ENCODE measurements at regions of chr3 and their contacts with region 1.

Region 1: DNA sequence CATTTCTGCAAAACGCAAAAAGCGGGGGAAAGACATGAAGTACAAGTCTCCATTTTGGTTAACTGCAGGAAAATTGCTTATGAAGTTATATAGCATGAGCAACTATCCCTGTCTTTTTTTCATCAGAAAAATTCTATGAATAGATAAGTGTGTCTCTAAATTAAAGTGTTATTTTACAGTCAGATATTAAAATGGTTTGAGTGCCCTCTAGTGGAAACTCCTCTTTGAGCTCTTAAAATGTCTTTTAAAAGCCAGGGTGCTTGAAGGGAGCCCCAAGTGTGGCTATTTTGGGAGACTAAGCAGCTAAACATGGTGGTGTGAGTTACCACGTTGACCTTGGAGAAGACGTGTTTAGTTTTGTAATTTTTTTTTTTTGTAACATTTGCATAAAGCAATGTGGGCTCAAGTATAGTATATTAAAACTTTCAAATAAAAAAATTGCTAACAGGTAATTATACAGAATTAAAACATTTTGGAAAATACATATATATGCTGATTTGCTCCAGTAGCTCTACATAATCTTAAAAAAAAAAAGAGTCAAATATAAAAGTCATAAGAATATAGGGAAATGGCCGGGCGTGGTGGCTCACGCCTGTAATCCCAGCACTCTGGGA is 77.2 kb downstream of the PPP2R3A start:
- DNase-seq: peak in 2 of 5 donors; percentile 3 to 9
- H3K4me3 ChIP-seq: no peak overlapping the region
- H3K4me3 Mint-ChIP-seq: no peak overlapping the region
- H3K27ac ChIP-seq: no peak overlapping the region
- H3K27ac Mint-ChIP-seq: no peak overlapping the region
- H3K4me1 ChIP-seq: no peaks in the 10 kb centered on the region
- H3K4me1 Mint-ChIP-seq: no peaks in the 10 kb centered on the region
- H3K27me3 ChIP-seq: peaks cover 6% of the 10 kb centered on the region
- H3K27me3 Mint-ChIP-seq: peaks cover 14% of the 10 kb centered on the region in 2 donors

Region 2: DNA sequence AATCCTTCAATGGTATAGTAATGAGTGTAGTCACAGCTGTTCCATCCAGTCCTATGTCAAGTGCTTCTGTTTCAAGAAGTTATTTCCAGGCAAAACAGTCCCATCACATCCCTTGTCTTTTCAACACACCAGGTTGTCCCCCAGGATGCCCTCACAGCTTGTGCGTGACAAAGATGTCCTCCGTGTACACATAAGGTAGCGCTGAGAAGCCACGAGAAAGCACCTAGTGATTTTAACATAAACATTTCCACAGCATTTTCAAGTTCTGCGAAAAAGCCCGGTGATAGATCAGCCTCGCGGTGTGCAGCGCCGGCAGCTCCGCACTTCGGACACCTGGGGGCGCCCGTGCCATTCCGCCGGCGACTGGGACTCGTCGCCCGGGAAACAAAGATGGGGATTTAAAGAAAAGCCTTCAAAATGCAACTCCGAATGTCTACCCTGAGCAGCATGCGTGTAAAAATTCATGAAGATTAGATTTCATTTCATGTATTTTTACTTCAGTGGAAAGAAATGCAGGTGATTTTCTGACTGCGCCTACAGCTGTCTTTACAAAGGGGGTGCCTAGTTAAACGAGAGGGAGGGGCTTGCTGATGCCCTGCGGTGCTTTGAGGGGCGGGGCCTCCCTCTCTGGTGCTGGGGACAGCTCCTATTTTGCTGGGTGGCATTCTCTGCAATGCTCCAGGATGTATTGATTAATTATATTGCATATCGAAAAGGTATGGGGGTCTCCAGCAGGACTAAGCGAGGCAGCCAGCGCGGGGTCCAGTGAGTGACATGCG is 1441.8 kb before region 1 on chr3:
- CTCF ChIA-PET with region 1: interaction called, 10 read pairs
- POLR2A ChIA-PET with region 1: no interaction called
- intact Hi-C with region 1: no loop called
- DNase-seq: peak in 4 of 5 donors; percentile 31 to 43 (median 38)
- H3K4me3 ChIP-seq: no peak overlapping the region
- H3K4me3 Mint-ChIP-seq: peak overlapping the region in 6 of 8 donors; percentile 1 to 68 (median 42)
- H3K27ac ChIP-seq: no peak overlapping the region
- H3K27ac Mint-ChIP-seq: no peak overlapping the region
- H3K4me1 ChIP-seq: no peaks in the 10 kb centered on the region
- H3K4me1 Mint-ChIP-seq: peaks cover 4 to 11% (median 6%) of the 10 kb centered on the region in 4 donors
- H3K27me3 ChIP-seq: no peaks in the 10 kb centered on the region
- H3K27me3 Mint-ChIP-seq: peaks cover 2 to 11% of the 10 kb centered on the region in 2 donors

Region 3: DNA sequence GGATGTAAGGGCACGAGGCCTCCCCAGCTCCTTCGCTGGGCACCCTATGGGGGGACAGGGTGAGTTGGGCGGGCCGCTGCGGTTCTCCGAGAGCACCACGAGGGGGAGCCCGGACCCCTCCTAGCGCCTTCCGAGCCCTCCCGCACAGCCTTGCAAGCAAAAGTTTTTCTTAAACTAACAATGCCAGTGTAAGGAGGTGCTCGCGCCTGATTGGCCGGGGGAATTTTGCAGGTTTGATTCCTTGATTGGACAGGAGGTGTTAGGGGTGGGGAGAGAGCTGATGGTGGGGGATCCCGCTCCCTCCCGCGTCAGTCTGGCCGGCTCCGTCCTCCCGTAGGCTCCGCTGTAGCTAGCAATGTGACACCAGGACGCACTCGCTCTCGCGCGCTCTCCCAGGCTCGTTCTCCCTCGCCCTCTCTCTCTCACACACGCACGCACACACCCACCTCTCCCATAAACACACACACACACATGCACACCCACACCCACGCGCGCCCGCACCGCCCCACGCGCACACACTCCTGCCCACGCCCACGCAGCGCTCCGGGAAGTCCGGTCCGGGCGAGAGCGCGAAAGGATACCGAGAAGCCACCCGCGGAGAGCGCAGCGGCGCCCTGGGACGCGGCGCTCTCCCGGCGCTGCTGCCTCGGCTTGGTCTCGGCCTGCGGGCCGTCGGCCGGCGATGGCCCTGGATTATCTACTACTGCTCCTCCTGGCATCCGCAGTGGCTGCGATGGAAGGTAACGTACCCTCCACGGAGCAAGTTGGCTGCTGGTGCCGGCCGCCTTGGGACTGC is 1247.6 kb before region 1 on chr3 and contains the start of gene EPHB1:
- CTCF ChIA-PET with region 1: interaction called, 10 read pairs
- POLR2A ChIA-PET with region 1: no interaction called
- intact Hi-C with region 1: loop called (anchors 5 kb)
- DNase-seq: peak; percentile 29 to 44 (median 38)
- H3K4me3 ChIP-seq: peak within 1 kb of the TSS in 1 of 2 donors; percentile 28
- H3K4me3 Mint-ChIP-seq: peak within 1 kb of the TSS; percentile 83 to 92 (median 87)
- H3K27ac ChIP-seq: no peak within 1 kb of the TSS
- H3K27ac Mint-ChIP-seq: peak within 1 kb of the TSS in 1 of 7 donors; percentile 67
- H3K4me1 ChIP-seq: no peaks in the 10 kb centered on the region
- H3K4me1 Mint-ChIP-seq: peaks cover 7 to 17% (median 11%) of the 10 kb centered on the region in 4 donors
- H3K27me3 ChIP-seq: no peaks in the 10 kb centered on the region
- H3K27me3 Mint-ChIP-seq: peaks cover 33 to 39% of the 10 kb centered on the region in 2 donors
- total RNA-seq, gene EPHB1: 0.69 TPM in 1 of 2 experiments, not detected in the other

Region 4: GRCh38 chr3:136070953-136071949 is 28.5 kb after region 1 on chr3:
- CTCF ChIA-PET with region 1: no interaction called
- POLR2A ChIA-PET with region 1: no interaction called
- intact Hi-C with region 1: no loop called
- DNase-seq: no peak
- H3K4me3 ChIP-seq: no peak overlapping the region
- H3K4me3 Mint-ChIP-seq: no peak overlapping the region
- H3K27ac ChIP-seq: no peak overlapping the region
- H3K27ac Mint-ChIP-seq: peak overlapping the region in 3 of 7 donors; percentile 1 to 36 (median 9)
- H3K4me1 ChIP-seq: no peaks in the 10 kb centered on the region
- H3K4me1 Mint-ChIP-seq: peaks cover 0 to 4% (median 1%) of the 10 kb centered on the region in 4 donors
- H3K27me3 ChIP-seq: no peaks in the 10 kb centered on the region
- H3K27me3 Mint-ChIP-seq: no peaks in the 10 kb centered on the region

Region 5: GRCh38 chr3:136377508-136377907 is 334.8 kb after region 1 on chr3:
- CTCF ChIA-PET with region 1: no interaction called
- POLR2A ChIA-PET with region 1: no interaction called
- intact Hi-C with region 1: no loop called
- DNase-seq: no peak
- H3K4me3 ChIP-seq: no peak overlapping the region
- H3K4me3 Mint-ChIP-seq: no peak overlapping the region
- H3K27ac ChIP-seq: no peak overlapping the region
- H3K27ac Mint-ChIP-seq: no peak overlapping the region
- H3K4me1 ChIP-seq: no peaks in the 10 kb centered on the region
- H3K4me1 Mint-ChIP-seq: peaks cover 0 to 3% (median 0%) of the 10 kb centered on the region in 4 donors
- H3K27me3 ChIP-seq: no peaks in the 10 kb centered on the region
- H3K27me3 Mint-ChIP-seq: no peaks in the 10 kb centered on the region

Measured in CD4-positive, alpha-beta memory T cell (primary cell).